GM23248 (cell line): ENCODE measurements at regions of chr11 and their contacts with region 1.

Region 1: GRCh38 chr11:44538375-44539054 is 26.9 kb upstream of the CD82 start:
- DNase-seq: peak; percentile 81
- H3K4me3 ChIP-seq: no peak overlapping the region
- H3K27ac ChIP-seq: no peak overlapping the region
- H3K4me1 ChIP-seq: no peaks in the 10 kb centered on the region
- H3K27me3 ChIP-seq: peaks cover 15% of the 10 kb centered on the region

Region 2: GRCh38 chr11:44133335-44133946 is 405.1 kb before region 1 on chr11:
- in situ Hi-C with region 1: loop called (anchors 10 kb)
- DNase-seq: peak; percentile 66
- H3K4me3 ChIP-seq: no peak overlapping the region
- H3K27ac ChIP-seq: no peak overlapping the region
- H3K4me1 ChIP-seq: peaks cover 4% of the 10 kb centered on the region
- H3K27me3 ChIP-seq: no peaks in the 10 kb centered on the region